Caco-2 (cell line): ENCODE measurements at regions of chr6 and their contacts with region 1.

Region 1: GRCh38 chr6:108904741-108905140 is 56.5 kb downstream of the ARMC2 start:
- DNase-seq: peak; percentile 52 to 63
- H3K4me3 ChIP-seq: no peak overlapping the region
- H3K4me3 Mint-ChIP-seq: peak overlapping the region; percentile 62
- H3K27ac Mint-ChIP-seq: peak overlapping the region; percentile 77
- H3K4me1 ChIP-seq: peaks cover 40% of the 10 kb centered on the region
- H3K4me1 Mint-ChIP-seq: peaks cover 38% of the 10 kb centered on the region
- H3K27me3 ChIP-seq: no peaks in the 10 kb centered on the region
- H3K27me3 Mint-ChIP-seq: no peaks in the 10 kb centered on the region
- CTCF ChIP-seq: no peak

Region 2: DNA sequence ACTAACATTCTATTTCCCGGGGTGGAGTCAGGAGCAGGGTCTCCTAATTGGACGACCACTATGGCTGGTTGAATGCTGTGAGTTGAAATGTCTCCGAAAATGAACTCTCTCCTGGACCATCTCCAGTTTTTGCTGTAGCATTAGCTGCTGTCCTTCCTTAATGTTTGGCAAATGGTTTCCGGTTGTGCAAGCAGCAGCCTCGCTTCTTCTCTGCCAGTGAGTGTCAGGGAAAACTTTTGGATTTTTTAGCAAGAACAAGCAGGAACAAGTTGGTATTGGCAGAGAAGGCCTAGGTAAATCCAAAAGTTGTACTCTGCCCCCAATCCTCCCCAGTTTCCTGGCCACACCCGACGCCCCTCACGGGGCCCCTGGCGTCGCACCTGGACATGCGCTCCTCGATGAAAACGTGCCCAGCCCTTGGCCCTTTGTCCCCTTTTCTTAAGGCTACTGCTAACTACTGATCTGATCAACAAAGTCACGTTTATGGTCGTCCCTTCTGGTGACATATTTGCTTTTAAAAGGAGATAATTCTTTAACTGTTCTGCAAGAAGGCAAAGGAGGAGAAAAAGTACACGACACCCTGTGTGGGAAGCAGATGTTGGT is 46.7 kb after region 1 on chr6:
- CTCF ChIA-PET with region 1: no interaction called
- POLR2A ChIA-PET with region 1: no interaction called
- intact Hi-C with region 1: loop called (anchors 2 kb)
- DNase-seq: peak in 1 of 2 experiments; percentile 17
- H3K4me3 ChIP-seq: no peak overlapping the region
- H3K4me3 Mint-ChIP-seq: no peak overlapping the region
- H3K27ac Mint-ChIP-seq: no peak overlapping the region
- H3K4me1 ChIP-seq: peaks cover 15% of the 10 kb centered on the region
- H3K4me1 Mint-ChIP-seq: peaks cover 7% of the 10 kb centered on the region
- H3K27me3 ChIP-seq: no peaks in the 10 kb centered on the region
- H3K27me3 Mint-ChIP-seq: no peaks in the 10 kb centered on the region
- CTCF ChIP-seq: no peak

Region 3: DNA sequence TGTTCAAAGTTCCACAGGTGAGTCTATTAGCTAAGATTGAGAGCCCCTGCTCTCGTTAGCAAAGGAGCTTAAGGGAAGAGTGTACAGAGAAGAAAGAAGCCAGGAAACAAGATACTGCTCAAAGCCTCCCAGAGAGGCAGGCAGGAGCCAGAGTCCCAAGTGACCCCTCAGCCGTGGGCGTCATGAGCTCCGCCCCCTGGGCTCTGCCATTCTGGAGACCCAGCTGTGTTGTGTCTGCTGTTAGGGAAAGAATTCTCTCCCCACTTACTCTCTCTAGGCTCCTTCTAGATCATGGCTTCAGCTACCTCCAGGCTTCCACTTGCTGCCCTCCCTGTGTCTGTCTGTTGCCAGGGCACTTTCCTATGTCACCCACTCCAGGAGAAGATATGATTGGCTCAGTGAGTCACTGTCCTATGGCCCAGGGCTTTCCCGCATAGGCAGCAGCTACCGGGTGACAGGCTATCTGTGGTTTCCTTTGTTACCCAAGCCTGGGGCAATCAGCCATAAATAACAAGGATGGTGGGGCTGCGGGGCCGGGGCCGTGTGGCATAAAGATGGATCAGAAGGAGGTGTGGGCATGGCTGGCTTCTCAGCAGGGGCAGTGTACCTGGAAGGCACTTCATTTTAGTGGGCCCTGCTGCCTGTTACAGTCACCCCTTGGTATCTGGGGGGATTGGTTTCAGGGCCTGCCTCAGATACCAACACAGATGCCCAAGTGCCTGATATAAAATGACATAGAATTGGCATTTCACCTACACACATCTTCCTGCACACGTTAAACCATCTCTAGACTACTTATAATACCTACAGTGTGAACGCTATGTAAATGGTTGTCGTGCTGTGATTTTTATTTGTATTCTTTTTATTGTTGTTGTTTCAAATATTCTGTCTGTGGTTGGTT is 62.4 kb after region 1 on chr6:
- CTCF ChIA-PET with region 1: no interaction called
- POLR2A ChIA-PET with region 1: no interaction called
- intact Hi-C with region 1: loop called (anchors 1 kb)
- DNase-seq: peak in 1 of 2 experiments; percentile 13
- H3K4me3 ChIP-seq: no peak overlapping the region
- H3K4me3 Mint-ChIP-seq: no peak overlapping the region
- H3K27ac Mint-ChIP-seq: peak overlapping the region; percentile 24
- H3K4me1 ChIP-seq: peaks cover 21% of the 10 kb centered on the region
- H3K4me1 Mint-ChIP-seq: peaks cover 7% of the 10 kb centered on the region
- H3K27me3 ChIP-seq: no peaks in the 10 kb centered on the region
- H3K27me3 Mint-ChIP-seq: no peaks in the 10 kb centered on the region
- CTCF ChIP-seq: no peak

Region 4: DNA sequence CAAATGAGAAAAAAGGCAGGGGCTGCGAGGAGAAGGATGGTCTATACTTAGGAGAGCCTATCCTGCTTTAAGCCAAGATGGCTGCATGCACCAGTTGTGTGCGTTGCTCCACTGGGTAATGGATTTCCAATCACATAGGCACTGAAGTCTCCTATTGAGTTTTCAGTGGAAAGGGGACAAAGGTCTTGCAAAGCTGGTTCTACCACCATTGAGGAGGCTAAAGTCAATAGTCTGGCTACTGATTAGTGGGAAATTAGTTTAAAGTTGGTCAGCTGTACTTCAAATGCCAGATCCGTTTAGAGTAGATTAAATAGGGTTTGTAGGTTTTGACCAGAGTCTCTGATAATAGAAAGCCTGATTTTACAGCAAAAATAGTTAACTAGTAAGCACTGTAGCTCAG is 85.0 kb after region 1 on chr6:
- CTCF ChIA-PET with region 1: no interaction called
- POLR2A ChIA-PET with region 1: no interaction called
- intact Hi-C with region 1: loop called (anchors 1 kb)
- DNase-seq: peak; percentile 71 to 80
- H3K4me3 ChIP-seq: no peak overlapping the region
- H3K4me3 Mint-ChIP-seq: peak overlapping the region; percentile 29
- H3K27ac Mint-ChIP-seq: peak overlapping the region; percentile 82
- H3K4me1 ChIP-seq: peaks cover 31% of the 10 kb centered on the region
- H3K4me1 Mint-ChIP-seq: peaks cover 33% of the 10 kb centered on the region
- H3K27me3 ChIP-seq: no peaks in the 10 kb centered on the region
- H3K27me3 Mint-ChIP-seq: no peaks in the 10 kb centered on the region
- CTCF ChIP-seq: no peak